ENCODE measurements at regions of chr7 and their contacts with region 1.

Region 1: DNA sequence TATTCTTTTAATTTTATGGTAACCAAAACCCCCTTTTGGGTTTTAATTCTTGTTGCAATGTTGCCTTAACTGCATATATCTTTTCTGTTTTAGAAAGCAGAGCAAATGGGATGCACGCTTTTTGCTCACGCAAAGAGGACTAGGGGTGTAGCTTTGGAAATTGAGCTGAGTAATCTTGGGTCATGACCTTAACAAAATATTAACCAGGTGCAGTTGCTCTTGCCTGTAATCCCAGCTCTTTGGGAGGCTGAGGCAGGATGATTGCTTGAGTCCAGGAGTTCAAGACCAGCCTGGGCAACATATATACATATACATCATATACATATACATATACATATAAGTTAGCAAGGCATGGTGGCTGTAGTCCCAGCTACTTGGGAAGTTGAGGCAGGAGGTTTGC is 172.9 kb upstream of the BMPER start:
- DNase-seq: no peak
- H3K4me3 ChIP-seq: no peak overlapping the region
- H3K27ac ChIP-seq: no peak overlapping the region
- H3K4me1 ChIP-seq: peaks cover 0 to 4% of the 10 kb centered on the region in 2 experiments; a peak in 1 of 4 replicates
- H3K27me3 ChIP-seq: no peaks in the 10 kb centered on the region
- CTCF ChIP-seq: no peak
- EP300 ChIP-seq: no peak
- RAD21 ChIP-seq: no peak

Region 2: DNA sequence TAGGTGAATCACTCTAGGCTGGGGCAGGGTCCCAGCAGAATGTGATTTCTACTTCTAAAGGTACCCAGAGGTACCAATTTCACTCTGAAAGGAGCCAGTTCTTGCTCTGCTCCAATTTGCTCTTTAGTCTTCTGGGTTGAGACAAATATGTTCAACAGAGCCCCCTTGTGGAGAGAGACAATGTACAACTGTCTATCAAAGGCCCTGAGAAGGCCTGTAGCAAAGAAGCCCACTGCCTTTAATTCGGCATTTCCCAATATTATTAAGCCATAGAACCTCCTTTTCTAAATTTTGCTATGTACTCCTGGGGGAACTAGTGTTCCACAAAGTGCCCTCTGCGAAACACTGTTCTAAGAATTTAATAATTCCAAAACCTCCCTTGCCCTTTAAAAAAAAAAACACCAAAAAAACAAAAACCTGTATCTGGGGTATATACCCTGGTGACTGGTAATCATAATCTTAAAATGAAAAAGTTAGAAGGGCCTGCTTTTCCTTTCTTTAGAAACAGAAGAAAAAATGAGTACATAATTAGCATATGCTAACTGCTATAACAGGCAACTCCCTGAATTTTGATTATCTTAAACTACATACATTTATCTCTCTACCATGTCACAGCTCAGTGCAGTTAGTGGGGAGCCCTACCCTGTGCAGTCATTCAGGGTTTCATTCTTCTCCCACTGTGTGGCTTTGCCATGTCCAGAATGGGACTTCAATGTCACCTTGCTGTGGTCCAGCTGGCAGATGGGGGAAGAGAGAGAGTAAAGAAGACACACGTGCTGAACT is 12.0 kb after region 1 on chr7:
- CTCF ChIA-PET with region 1: interaction called, 13 read pairs
- POLR2A ChIA-PET with region 1: no interaction called
- DNase-seq: no peak
- H3K4me3 ChIP-seq: no peak overlapping the region
- H3K27ac ChIP-seq: no peak overlapping the region
- H3K4me1 ChIP-seq: no peaks in the 10 kb centered on the region
- H3K27me3 ChIP-seq: no peaks in the 10 kb centered on the region
- CTCF ChIP-seq: peak; percentile 43
- EP300 ChIP-seq: no peak
- RAD21 ChIP-seq: peak; percentile 45; the same call in 1 of the 2 replicates

Region 3: GRCh38 chr7:33764752-33765451 is 32.4 kb after region 1 on chr7:
- CTCF ChIA-PET with region 1: no interaction called
- POLR2A ChIA-PET with region 1: no interaction called
- DNase-seq: no peak
- H3K4me3 ChIP-seq: no peak overlapping the region
- H3K27ac ChIP-seq: no peak overlapping the region; a peak in 1 of 4 replicates
- H3K4me1 ChIP-seq: peaks cover 0 to 14% of the 10 kb centered on the region in 2 experiments; a peak in 1 of 4 replicates
- H3K27me3 ChIP-seq: no peaks in the 10 kb centered on the region
- CTCF ChIP-seq: no peak
- EP300 ChIP-seq: 0 out of 4 replicates have a peak, but pooled peaks of 1 of the 2 experiments have one; percentile 42
- RAD21 ChIP-seq: no peak

Measured in SK-N-SH (cell line).